Right lobe of liver (tissue), 6 donors: ENCODE measurements at regions of chr3 and their contacts with region 1.

Region 1: GRCh38 chr3:10224784-10225665 is 23.2 kb upstream of the TATDN2 start:
- DNase-seq: peak; percentile 66 to 93 (median 76)
- ATAC-seq: peak; percentile 86 to 98 (median 95)
- H3K4me3 ChIP-seq: no peak overlapping the region
- H3K27ac ChIP-seq: no peak overlapping the region
- H3K4me1 ChIP-seq: peaks cover 0 to 18% (median 8%) of the 10 kb centered on the region in 4 donors
- H3K27me3 ChIP-seq: no peaks in the 10 kb centered on the region
- CTCF ChIP-seq: peak; percentile 84 to 93 (median 86)
- POLR2A ChIP-seq: no peak

Region 2: GRCh38 chr3:9932843-9933560 is 292.0 kb before region 1 on chr3:
- intact Hi-C with region 1: loop called in 1 of 2 experiments (anchors 10 kb)
- DNase-seq: peak; percentile 81 to 87 (median 86)
- ATAC-seq: peak; percentile 71 to 77 (median 76)
- H3K4me3 ChIP-seq: peak overlapping the region; percentile 71 to 86 (median 80)
- H3K27ac ChIP-seq: peak overlapping the region; percentile 61 to 88 (median 80)
- H3K4me1 ChIP-seq: peaks cover 0 to 30% (median 7%) of the 10 kb centered on the region in 4 donors
- H3K27me3 ChIP-seq: no peaks in the 10 kb centered on the region
- CTCF ChIP-seq: peak; percentile 60 to 77 (median 74)
- POLR2A ChIP-seq: no peak

Region 3: GRCh38 chr3:10099041-10099440 is 126.0 kb before region 1 on chr3:
- intact Hi-C with region 1: no loop called
- DNase-seq: no peak
- ATAC-seq: no peak
- H3K4me3 ChIP-seq: no peak overlapping the region
- H3K27ac ChIP-seq: no peak overlapping the region
- H3K4me1 ChIP-seq: no peaks in the 10 kb centered on the region
- H3K27me3 ChIP-seq: no peaks in the 10 kb centered on the region
- CTCF ChIP-seq: no peak
- POLR2A ChIP-seq: no peak

Region 4: GRCh38 chr3:10173926-10174435 is 51.0 kb before region 1 on chr3:
- intact Hi-C with region 1: loop called in 1 of 2 experiments (anchors 10 kb)
- DNase-seq: peak; percentile 67 to 73 (median 72)
- ATAC-seq: peak; percentile 80 to 92 (median 88)
- H3K4me3 ChIP-seq: no peak overlapping the region
- H3K27ac ChIP-seq: peak overlapping the region; percentile 47 to 78 (median 62)
- H3K4me1 ChIP-seq: peaks cover 0 to 16% (median 6%) of the 10 kb centered on the region in 4 donors
- H3K27me3 ChIP-seq: no peaks in the 10 kb centered on the region
- CTCF ChIP-seq: no peak
- POLR2A ChIP-seq: peak; percentile 14

Region 5: GRCh38 chr3:10283638-10284037 is 58.6 kb after region 1 on chr3:
- intact Hi-C with region 1: no loop called
- DNase-seq: no peak
- ATAC-seq: no peak
- H3K4me3 ChIP-seq: no peak overlapping the region
- H3K27ac ChIP-seq: no peak overlapping the region
- H3K4me1 ChIP-seq: no peaks in the 10 kb centered on the region
- H3K27me3 ChIP-seq: no peaks in the 10 kb centered on the region
- CTCF ChIP-seq: no peak
- POLR2A ChIP-seq: no peak